ENCODE measurements at regions of chr7 and their contacts with region 1.

Region 1: GRCh38 chr7:47669061-47669891 is 87.4 kb upstream of the TNS3 start:
- DNase-seq: peak; percentile 63
- ATAC-seq: peak; percentile 79
- H3K4me3 Mint-ChIP-seq: peak overlapping the region; percentile 67
- H3K27ac Mint-ChIP-seq: peak overlapping the region; percentile 95
- H3K4me1 Mint-ChIP-seq: peaks cover 65% of the 10 kb centered on the region
- H3K27me3 Mint-ChIP-seq: no peaks in the 10 kb centered on the region
- CTCF ChIP-seq: no peak

Region 2: GRCh38 chr7:47497367-47498096 is 171.7 kb before region 1 on chr7:
- CTCF ChIA-PET with region 1: no interaction called
- POLR2A ChIA-PET with region 1: interaction called, 4 read pairs
- intact Hi-C with region 1: loop called (anchors 1 kb)
- DNase-seq: no peak
- ATAC-seq: peak; percentile 81
- H3K4me3 Mint-ChIP-seq: peak overlapping the region; percentile 64
- H3K27ac Mint-ChIP-seq: peak overlapping the region; percentile 87
- H3K4me1 Mint-ChIP-seq: peaks cover 70% of the 10 kb centered on the region
- H3K27me3 Mint-ChIP-seq: no peaks in the 10 kb centered on the region
- CTCF ChIP-seq: no peak

Region 3: DNA sequence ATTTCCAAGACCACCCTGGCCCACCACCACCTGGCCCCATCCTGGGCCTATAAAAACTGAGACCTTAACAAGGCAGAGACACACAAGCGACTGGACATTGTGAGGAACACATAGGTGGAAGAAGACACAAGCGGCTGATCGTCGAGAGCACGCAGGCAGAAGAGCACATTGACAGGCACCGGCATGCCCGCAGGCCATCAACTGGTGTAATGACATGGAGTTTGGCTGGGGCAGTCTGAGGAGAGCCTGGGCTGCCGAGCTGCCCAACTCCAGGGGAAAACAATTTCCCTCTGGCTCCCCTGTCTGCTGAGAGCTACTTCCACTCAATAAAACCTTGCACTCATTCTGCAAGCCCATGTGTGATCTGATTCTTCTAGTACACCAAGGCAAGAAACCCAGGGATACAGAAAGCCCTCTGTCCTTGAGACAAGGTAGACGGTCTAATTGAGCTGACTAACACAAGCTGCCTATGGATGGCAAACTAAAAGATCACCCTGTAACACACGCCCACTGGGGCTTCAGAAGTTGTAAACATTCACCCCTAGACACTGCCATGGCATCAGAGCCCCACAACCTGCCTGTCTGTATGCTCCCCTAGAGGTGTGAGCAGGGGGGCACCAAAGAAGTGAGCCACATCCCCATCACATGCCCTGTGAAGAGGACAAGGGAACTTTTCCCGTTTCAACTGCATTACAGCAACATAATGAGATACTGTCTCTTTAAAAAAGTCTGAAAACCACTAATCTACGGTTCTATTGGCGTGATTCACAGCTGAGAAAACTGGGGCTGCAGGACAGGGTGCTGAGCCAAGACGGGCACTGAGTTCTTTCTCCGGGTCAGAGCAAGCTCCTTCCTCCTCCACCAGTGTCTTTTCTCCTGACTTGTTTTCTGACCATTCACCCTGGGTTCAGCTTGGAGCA is 68.8 kb before region 1 on chr7:
- CTCF ChIA-PET with region 1: no interaction called
- POLR2A ChIA-PET with region 1: interaction called, 20 read pairs
- intact Hi-C with region 1: loop called (anchors 1 kb)
- DNase-seq: no peak
- ATAC-seq: peak; percentile 56
- H3K4me3 Mint-ChIP-seq: peak overlapping the region; percentile 59
- H3K27ac Mint-ChIP-seq: peak overlapping the region; percentile 90
- H3K4me1 Mint-ChIP-seq: peaks cover 49% of the 10 kb centered on the region
- H3K27me3 Mint-ChIP-seq: no peaks in the 10 kb centered on the region
- CTCF ChIP-seq: no peak

Region 4: GRCh38 chr7:47714669-47715607 is 45.7 kb after region 1 on chr7:
- CTCF ChIA-PET with region 1: no interaction called
- POLR2A ChIA-PET with region 1: no interaction called
- intact Hi-C with region 1: loop called (anchors 1 kb)
- DNase-seq: no peak
- ATAC-seq: peak; percentile 81
- H3K4me3 Mint-ChIP-seq: peak overlapping the region; percentile 1
- H3K27ac Mint-ChIP-seq: peak overlapping the region; percentile 66
- H3K4me1 Mint-ChIP-seq: peaks cover 30% of the 10 kb centered on the region
- H3K27me3 Mint-ChIP-seq: no peaks in the 10 kb centered on the region
- CTCF ChIP-seq: no peak

Region 5: DNA sequence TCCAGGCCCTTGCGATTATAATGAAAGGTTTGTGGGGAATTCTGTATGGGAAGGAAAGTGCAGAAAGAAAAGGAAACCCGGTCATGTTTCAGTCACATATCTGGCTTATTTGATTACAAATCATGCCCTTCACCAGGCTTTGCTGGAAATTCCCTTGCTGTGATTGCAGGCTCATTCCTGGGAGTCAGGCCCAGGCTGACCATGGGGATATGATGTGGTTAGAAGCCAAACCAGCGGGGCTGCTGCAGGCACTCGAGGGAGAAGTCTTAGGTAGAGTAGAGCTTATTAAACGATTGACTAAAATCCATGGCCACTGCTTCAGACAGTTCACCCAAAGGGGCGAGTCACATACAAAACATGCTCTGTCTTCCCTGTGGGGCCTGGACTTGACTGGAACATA is 262.7 kb after region 1 on chr7:
- CTCF ChIA-PET with region 1: no interaction called
- POLR2A ChIA-PET with region 1: interaction called, 9 read pairs
- intact Hi-C with region 1: loop called (anchors 2 kb)
- DNase-seq: no peak
- ATAC-seq: no peak
- H3K4me3 Mint-ChIP-seq: no peak overlapping the region
- H3K27ac Mint-ChIP-seq: no peak overlapping the region
- H3K4me1 Mint-ChIP-seq: peaks cover 35% of the 10 kb centered on the region
- H3K27me3 Mint-ChIP-seq: peaks cover 2% of the 10 kb centered on the region
- CTCF ChIP-seq: no peak

Measured in activated B cell treated with CpG ODN at 0.5 μM for 24 hours (primary cell).